ENCODE measurements at regions of chr17 and their contacts with region 1.

Region 1: GRCh38 chr17:7572588-7573323 is 6.7 kb upstream of the CD68 start:
- DNase-seq: peak; percentile 100
- ATAC-seq: no peak
- H3K4me3 Mint-ChIP-seq: peak overlapping the region; percentile 98
- H3K27ac Mint-ChIP-seq: peak overlapping the region; percentile 99
- H3K4me1 Mint-ChIP-seq: peaks cover 48% of the 10 kb centered on the region
- H3K27me3 Mint-ChIP-seq: no peaks in the 10 kb centered on the region
- CTCF ChIP-seq: no peak

Region 2: GRCh38 chr17:7239091-7240027 is 333.4 kb before region 1 on chr17 and contains the start of gene PHF23:
- CTCF ChIA-PET with region 1: no interaction called
- POLR2A ChIA-PET with region 1: no interaction called
- intact Hi-C with region 1: loop called (anchors 2 kb)
- DNase-seq: peak; percentile 93
- ATAC-seq: peak; percentile 64
- H3K4me3 Mint-ChIP-seq: peak within 1 kb of the TSS; percentile 99
- H3K27ac Mint-ChIP-seq: peak within 1 kb of the TSS; percentile 100
- H3K4me1 Mint-ChIP-seq: peaks cover 63% of the 10 kb centered on the region
- H3K27me3 Mint-ChIP-seq: no peaks in the 10 kb centered on the region
- CTCF ChIP-seq: no peak
- total RNA-seq, gene PHF23: 45.5 and 46.6 TPM in 2 replicates

Region 3: GRCh38 chr17:7444682-7445618 is 127.8 kb before region 1 on chr17 and contains the start of gene CHRNB1:
- CTCF ChIA-PET with region 1: no interaction called
- POLR2A ChIA-PET with region 1: interaction called, 11 read pairs
- intact Hi-C with region 1: no loop called
- DNase-seq: peak; percentile 23
- ATAC-seq: peak; percentile 32
- H3K4me3 Mint-ChIP-seq: peak within 1 kb of the TSS; percentile 78
- H3K27ac Mint-ChIP-seq: no peak within 1 kb of the TSS
- H3K4me1 Mint-ChIP-seq: peaks cover 35% of the 10 kb centered on the region
- H3K27me3 Mint-ChIP-seq: peaks cover 62% of the 10 kb centered on the region
- CTCF ChIP-seq: no peak
- total RNA-seq, gene CHRNB1: 5.9 and 6.0 TPM in 2 replicates

Region 4: GRCh38 chr17:7561028-7561575 is 11.7 kb before region 1 on chr17:
- CTCF ChIA-PET with region 1: interaction called, 18 read pairs
- POLR2A ChIA-PET with region 1: interaction called, 74 read pairs
- intact Hi-C with region 1: loop called (anchors 1 kb)
- DNase-seq: peak; percentile 76
- ATAC-seq: peak; percentile 68
- H3K4me3 Mint-ChIP-seq: peak overlapping the region; percentile 92
- H3K27ac Mint-ChIP-seq: peak overlapping the region; percentile 96
- H3K4me1 Mint-ChIP-seq: peaks cover 60% of the 10 kb centered on the region
- H3K27me3 Mint-ChIP-seq: no peaks in the 10 kb centered on the region
- CTCF ChIP-seq: no peak

Region 5: DNA sequence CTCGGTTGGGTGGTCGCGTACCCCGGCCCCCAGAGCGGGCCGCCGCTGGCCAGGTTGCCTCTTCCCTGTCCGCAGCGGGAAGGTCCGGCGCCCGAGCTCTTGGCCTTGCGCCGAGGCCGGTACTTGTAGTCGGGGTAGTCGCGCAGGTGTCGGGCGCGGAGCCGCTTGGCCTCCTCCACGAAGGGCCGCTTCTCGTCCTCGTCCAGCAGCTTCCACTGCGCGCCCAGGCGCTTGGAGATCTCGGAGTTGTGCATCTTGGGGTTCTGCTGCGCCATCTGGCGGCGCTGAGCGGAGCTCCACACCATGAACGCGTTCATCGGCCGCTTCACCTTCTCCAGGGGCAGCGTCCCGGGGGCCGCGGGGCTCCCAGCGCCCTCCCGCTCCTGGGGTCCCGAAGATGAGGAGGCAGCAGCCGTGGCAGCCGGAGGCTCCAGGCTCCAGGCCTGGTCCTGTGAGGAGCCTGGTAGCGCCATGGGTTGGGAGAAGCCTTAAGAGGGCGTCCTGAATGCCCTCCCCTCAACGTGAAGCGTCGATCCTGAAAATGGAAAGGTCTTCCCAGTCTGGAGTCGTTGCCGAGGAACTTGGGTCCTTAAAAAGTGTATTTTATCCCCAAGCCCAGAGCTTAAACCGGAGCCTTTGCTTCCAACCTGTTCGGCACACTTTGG is 16.6 kb after region 1 on chr17:
- CTCF ChIA-PET with region 1: interaction called, 8 read pairs
- POLR2A ChIA-PET with region 1: interaction called, 131 read pairs
- intact Hi-C with region 1: loop called (anchors 1 kb)
- DNase-seq: peak; percentile 66
- ATAC-seq: peak; percentile 89
- H3K4me3 Mint-ChIP-seq: no peak overlapping the region
- H3K27ac Mint-ChIP-seq: no peak overlapping the region
- H3K4me1 Mint-ChIP-seq: peaks cover 13% of the 10 kb centered on the region
- H3K27me3 Mint-ChIP-seq: no peaks in the 10 kb centered on the region
- CTCF ChIP-seq: peak; percentile 44

Region 6: DNA sequence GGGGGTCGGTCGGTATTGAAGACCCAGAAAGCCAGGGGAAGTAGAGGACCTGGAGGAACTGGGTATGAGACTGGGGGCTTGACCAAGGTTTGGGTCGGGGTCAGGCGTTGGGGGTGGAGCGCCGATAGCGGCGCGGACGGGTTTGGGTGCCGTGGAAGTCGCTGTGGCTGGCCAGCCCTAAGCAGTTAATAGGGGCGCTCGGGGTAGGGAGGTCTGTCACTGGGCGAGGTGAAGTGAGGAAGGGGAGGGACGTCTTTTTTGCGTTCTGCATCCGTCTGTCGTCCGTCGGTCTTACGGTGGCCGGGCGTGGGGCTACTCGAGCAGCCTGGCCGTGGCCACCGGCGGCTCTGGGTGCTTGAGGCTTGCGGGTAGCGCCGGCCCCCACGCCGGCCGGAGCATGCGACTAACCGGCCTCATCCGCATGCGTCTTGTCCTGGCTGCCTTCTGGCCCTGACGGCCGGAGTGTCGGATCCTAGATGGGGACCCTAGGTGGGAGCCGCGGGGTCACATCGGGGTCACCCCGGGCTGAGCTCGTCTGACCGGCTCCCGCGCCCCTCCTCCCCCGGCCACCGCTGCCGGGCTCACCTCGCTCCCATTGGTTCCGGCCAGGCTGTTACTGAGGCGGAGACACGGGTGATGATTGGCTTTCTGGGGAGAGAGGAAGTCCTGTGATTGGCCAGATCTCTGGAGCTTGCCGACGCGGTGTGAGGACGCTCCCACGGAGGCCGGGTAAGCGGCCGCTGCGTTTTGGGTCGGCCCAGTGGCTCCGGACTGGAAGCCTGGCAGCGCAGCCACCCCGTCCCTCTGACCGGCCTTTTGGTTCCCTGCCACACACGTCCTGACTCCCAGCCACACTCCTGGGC is 271.8 kb after region 1 on chr17:
- CTCF ChIA-PET with region 1: no interaction called
- POLR2A ChIA-PET with region 1: no interaction called
- intact Hi-C with region 1: loop called (anchors 2 kb)
- DNase-seq: peak; percentile 83
- ATAC-seq: peak; percentile 46
- H3K4me3 Mint-ChIP-seq: peak overlapping the region; percentile 98
- H3K27ac Mint-ChIP-seq: peak overlapping the region; percentile 100
- H3K4me1 Mint-ChIP-seq: peaks cover 50% of the 10 kb centered on the region
- H3K27me3 Mint-ChIP-seq: no peaks in the 10 kb centered on the region
- CTCF ChIP-seq: no peak

Measured in activated B cell treated with CpG ODN at 0.5 μM for 24 hours (primary cell).